Activated CD4-positive, alpha-beta memory T cell treated with anti-CD3 and anti-CD28 coated beads for 36 hours (primary cell): ENCODE measurements at regions of chr15 and their contacts with region 1.

Region 1: GRCh38 chr15:34951993-34952392 is 17.5 kb downstream of the AQR start:
- DNase-seq: no peak
- H3K4me3 Mint-ChIP-seq: no peak overlapping the region
- H3K27ac Mint-ChIP-seq: no peak overlapping the region
- H3K4me1 Mint-ChIP-seq: peaks cover 8% of the 10 kb centered on the region
- H3K27me3 Mint-ChIP-seq: no peaks in the 10 kb centered on the region

Region 2: GRCh38 chr15:34969340-34970097 is 17.5 kb after region 1 on chr15 and contains the start of gene AQR:
- CTCF ChIA-PET with region 1: interaction called, 14 read pairs
- POLR2A ChIA-PET with region 1: interaction called, 3 read pairs
- intact Hi-C with region 1: no loop called
- DNase-seq: peak; percentile 96
- H3K4me3 Mint-ChIP-seq: peak within 1 kb of the TSS; percentile 100
- H3K27ac Mint-ChIP-seq: peak within 1 kb of the TSS; percentile 95
- H3K4me1 Mint-ChIP-seq: peaks cover 31% of the 10 kb centered on the region
- H3K27me3 Mint-ChIP-seq: no peaks in the 10 kb centered on the region
- total RNA-seq, gene AQR: 30.1 to 33.2 TPM